ENCODE measurements at regions of chr6 and their contacts with region 1.

Region 1: GRCh38 chr6:104682722-104683643 is 176.7 kb downstream of the HACE1 start:
- DNase-seq: peak; percentile 46
- H3K4me3 Mint-ChIP-seq: no peak overlapping the region
- H3K27ac Mint-ChIP-seq: no peak overlapping the region
- H3K4me1 Mint-ChIP-seq: peaks cover 9% of the 10 kb centered on the region
- H3K27me3 Mint-ChIP-seq: no peaks in the 10 kb centered on the region

Region 2: GRCh38 chr6:104623052-104623690 is 59.8 kb before region 1 on chr6:
- intact Hi-C with region 1: no loop called
- DNase-seq: no peak
- H3K4me3 Mint-ChIP-seq: no peak overlapping the region
- H3K27ac Mint-ChIP-seq: no peak overlapping the region
- H3K4me1 Mint-ChIP-seq: peaks cover 3% of the 10 kb centered on the region
- H3K27me3 Mint-ChIP-seq: peaks cover 11% of the 10 kb centered on the region

Region 3: DNA sequence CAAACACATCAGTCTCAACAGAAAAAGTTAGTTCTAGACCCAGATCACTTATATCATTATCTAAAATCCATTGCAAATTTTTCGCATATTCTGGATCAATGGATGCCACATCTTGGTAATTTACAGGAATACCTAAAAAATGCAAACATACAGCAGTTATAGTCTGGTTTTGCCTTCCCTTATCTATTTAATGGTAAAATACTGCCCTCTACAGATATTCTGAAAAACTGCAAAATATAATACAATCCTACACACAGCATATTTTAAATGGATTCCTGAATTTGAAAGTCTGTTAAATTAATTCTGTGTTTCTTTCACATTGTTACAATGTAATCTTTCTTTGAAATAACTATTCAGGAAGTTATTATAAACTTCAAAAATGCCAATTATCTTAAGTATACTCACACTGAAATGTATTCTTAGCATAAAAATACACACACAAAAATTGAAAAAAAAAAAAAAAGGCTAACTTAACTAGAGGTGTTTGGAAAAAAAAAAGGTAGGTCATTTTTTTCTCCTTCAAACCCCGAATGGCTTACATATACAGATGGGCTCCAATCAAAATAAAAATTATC is 88.4 kb after region 1 on chr6:
- intact Hi-C with region 1: loop called (anchors 1 kb)
- DNase-seq: no peak
- H3K4me3 Mint-ChIP-seq: no peak overlapping the region
- H3K27ac Mint-ChIP-seq: no peak overlapping the region
- H3K4me1 Mint-ChIP-seq: peaks cover 10% of the 10 kb centered on the region
- H3K27me3 Mint-ChIP-seq: no peaks in the 10 kb centered on the region

Region 4: GRCh38 chr6:104859225-104860146 is 176.5 kb after region 1 on chr6 and contains the start of gene HACE1:
- intact Hi-C with region 1: loop called (anchors 5 kb)
- DNase-seq: peak; percentile 84
- H3K4me3 Mint-ChIP-seq: peak within 1 kb of the TSS; percentile 94
- H3K27ac Mint-ChIP-seq: peak within 1 kb of the TSS; percentile 82
- H3K4me1 Mint-ChIP-seq: peaks cover 22% of the 10 kb centered on the region
- H3K27me3 Mint-ChIP-seq: peaks cover 2% of the 10 kb centered on the region
- total RNA-seq, gene HACE1: 19.0 and 19.2 TPM in 2 replicates

Region 5: DNA sequence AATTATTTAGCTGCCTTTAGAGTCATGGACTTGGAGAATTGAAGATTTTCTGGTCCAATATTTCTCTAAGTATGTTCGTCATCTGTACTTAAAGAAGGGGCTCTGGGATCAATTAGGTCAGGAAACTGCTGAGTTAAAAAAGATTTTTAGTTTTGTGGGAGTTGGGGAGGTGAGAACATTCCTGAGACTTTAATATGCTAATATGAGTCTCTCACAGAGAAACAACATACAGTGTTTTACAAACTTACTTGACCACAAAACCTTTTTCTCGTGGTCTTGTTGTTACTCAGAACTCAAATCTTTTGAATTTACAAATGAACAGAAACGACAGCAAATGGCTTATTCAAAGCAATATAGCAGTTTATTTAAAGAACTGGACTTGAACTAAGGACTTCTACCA is 341.8 kb after region 1 on chr6:
- intact Hi-C with region 1: no loop called
- DNase-seq: no peak
- H3K4me3 Mint-ChIP-seq: no peak overlapping the region
- H3K27ac Mint-ChIP-seq: no peak overlapping the region
- H3K4me1 Mint-ChIP-seq: no peaks in the 10 kb centered on the region
- H3K27me3 Mint-ChIP-seq: peaks cover 11% of the 10 kb centered on the region